K562 (cell line): ENCODE measurements at regions of chr11 and their contacts with region 1.

Region 1: GRCh38 chr11:65606876-65607613 is 7.0 kb downstream of the MAP3K11 start:
- DNase-seq: peak; percentile 67 to 88 (median 81)
- ATAC-seq: peak; percentile 93
- H3K4me3 ChIP-seq: no peak overlapping the region
- H3K27ac ChIP-seq: no peak overlapping the region
- H3K4me1 ChIP-seq: peaks cover 9 to 39% of the 10 kb centered on the region in 2 experiments; a peak in 4 of 5 replicates
- H3K27me3 ChIP-seq: no peaks in the 10 kb centered on the region
- CTCF ChIP-seq: no peak
- EP300 ChIP-seq: no peak
- POLR2A ChIP-seq: no peak
- RAD21 ChIP-seq: no peak

Region 2: DNA sequence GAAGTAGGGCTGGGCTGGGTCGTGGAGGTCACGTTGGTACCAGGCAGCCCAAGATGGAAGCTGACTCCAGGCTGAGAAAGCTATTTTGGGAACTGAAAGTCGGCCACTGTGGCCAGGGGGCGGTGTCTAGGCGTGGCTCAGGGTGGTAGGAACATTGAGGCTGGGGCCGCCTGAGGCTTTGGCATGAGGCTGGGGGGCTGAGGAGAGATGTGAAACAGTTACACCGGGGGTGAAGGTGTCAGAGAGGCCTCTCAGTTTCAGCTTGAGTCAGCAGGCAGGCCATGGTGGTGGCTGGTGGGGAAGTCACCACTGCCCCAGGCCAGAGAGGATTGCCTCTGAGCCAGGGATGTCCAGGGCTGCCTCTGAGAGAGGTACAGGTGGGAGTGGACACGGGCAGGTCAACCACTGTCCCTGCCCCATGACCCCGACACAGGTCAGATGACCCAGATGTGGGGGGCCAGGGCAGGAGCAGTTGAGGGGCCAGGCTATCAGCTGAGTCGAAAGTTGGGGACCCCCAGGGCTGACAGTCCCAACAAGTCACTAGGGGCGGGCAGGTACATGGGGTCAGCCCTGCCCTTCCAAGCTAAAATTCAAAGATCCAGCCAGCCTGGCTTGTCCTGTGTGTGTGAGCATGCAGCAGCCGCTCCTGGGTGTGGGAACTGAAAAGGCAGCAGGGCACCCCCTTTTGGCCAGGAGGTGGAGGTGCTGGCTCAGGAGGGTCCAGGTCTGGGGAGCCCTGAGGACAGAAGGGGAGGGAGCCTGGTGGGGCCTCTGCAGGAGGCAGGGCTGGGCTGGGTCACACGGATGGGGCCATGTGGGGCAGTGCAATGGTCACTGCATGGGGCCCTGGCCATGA is 18.6 kb before region 1 on chr11:
- CTCF ChIA-PET with region 1: no interaction called
- POLR2A ChIA-PET with region 1: interaction called, 10 read pairs
- in situ Hi-C with region 1: no loop called
- intact Hi-C with region 1: no loop called
- DNase-seq: peak; percentile 66 to 84 (median 77)
- ATAC-seq: peak; percentile 97
- H3K4me3 ChIP-seq: no peak overlapping the region
- H3K27ac ChIP-seq: peak overlapping the region; percentile 31; the same call in 1 of the 3 replicates
- H3K4me1 ChIP-seq: peaks cover 16 to 70% of the 10 kb centered on the region in 2 experiments
- H3K27me3 ChIP-seq: no peaks in the 10 kb centered on the region
- CTCF ChIP-seq: peak; percentile 83 to 90 (median 84)
- EP300 ChIP-seq: 0 out of 2 replicates have a peak, but pooled peaks have one; percentile 12
- POLR2A ChIP-seq: no peak
- RAD21 ChIP-seq: peak; percentile 36 to 69